Activated CD4-positive, alpha-beta T cell treated with anti-CD3 and anti-CD28 coated beads, Interleukin-2, amount 10 ng/mL, durations not matched to agents 7 days and 5 days (primary cell): ENCODE measurements at regions of chr2 and their contacts with region 1.

Region 1: GRCh38 chr2:201231781-201232466 is 28.4 kb upstream of the CASP8 start:
- DNase-seq: peak; percentile 97
- H3K4me3 Mint-ChIP-seq: peak overlapping the region; percentile 92
- H3K27ac Mint-ChIP-seq: peak overlapping the region; percentile 90
- H3K4me1 Mint-ChIP-seq: peaks cover 55% of the 10 kb centered on the region
- H3K27me3 Mint-ChIP-seq: no peaks in the 10 kb centered on the region

Region 2: DNA sequence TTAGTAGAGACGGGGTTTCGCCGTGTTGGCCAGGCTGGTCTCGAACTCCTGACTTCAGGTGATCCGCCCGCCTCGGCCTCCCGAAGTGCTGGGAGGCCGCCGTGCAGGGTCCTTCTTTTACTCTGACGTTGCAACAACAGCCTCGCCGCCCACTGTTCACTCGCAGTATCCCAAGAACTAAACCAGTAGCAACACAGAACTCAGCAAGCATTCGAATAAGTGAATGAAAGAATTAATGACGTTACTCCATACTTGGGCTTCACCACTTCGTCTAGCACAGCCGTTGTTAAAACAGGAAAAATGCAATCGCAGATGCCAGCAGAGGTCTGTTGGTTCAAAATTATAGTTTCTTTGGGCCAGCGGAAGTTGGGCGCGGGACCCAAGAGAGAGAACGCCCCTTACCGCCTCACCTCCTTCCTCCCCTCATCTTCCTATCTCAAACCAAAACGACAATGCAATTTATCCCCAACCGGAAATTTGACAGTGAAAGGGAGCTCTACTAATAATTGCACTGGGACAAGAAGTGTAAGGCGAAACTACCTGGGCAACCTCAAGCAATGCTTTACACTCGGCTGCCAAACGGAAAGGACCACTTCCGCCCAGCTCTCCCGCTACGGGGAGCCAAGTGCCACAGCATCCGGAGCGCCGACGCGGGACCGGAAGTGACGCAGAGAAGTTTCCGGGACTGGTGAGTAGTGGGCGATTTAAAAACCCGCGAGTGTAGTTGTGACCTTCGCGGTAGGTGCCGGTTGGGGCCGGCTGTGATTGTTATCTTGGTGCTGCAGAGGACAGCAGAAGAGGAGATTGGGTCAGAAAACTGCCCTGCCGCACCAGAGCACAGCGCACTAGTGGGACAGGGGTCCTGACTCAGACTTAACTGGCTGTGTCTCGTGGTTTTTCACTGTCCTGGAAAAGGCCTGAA is 343.0 kb before region 1 on chr2 and contains the starts of genes NIF3L1 and PPIL3:
- CTCF ChIA-PET with region 1: interaction called, 17 read pairs
- POLR2A ChIA-PET with region 1: interaction called, 3 read pairs
- DNase-seq: peak; percentile 98
- H3K4me3 Mint-ChIP-seq: peak within 1 kb of the TSS; percentile 97
- H3K27ac Mint-ChIP-seq: peak within 1 kb of the TSS; percentile 99
- H3K4me1 Mint-ChIP-seq: peaks cover 52% of the 10 kb centered on the region
- H3K27me3 Mint-ChIP-seq: no peaks in the 10 kb centered on the region
- total RNA-seq, gene NIF3L1: 32.5 to 37.1 TPM
- total RNA-seq, gene PPIL3: 42.6 to 47.7 TPM

Region 3: GRCh38 chr2:201182650-201183364 is 49.1 kb before region 1 on chr2 and contains the start of gene CASP10:
- CTCF ChIA-PET with region 1: interaction called, 46 read pairs
- POLR2A ChIA-PET with region 1: interaction called, 12 read pairs
- DNase-seq: peak; percentile 50
- H3K4me3 Mint-ChIP-seq: peak within 1 kb of the TSS; percentile 90
- H3K27ac Mint-ChIP-seq: peak within 1 kb of the TSS; percentile 89
- H3K4me1 Mint-ChIP-seq: peaks cover 40% of the 10 kb centered on the region
- H3K27me3 Mint-ChIP-seq: no peaks in the 10 kb centered on the region
- total RNA-seq, gene CASP10: 45.0 to 49.6 TPM

Region 4: DNA sequence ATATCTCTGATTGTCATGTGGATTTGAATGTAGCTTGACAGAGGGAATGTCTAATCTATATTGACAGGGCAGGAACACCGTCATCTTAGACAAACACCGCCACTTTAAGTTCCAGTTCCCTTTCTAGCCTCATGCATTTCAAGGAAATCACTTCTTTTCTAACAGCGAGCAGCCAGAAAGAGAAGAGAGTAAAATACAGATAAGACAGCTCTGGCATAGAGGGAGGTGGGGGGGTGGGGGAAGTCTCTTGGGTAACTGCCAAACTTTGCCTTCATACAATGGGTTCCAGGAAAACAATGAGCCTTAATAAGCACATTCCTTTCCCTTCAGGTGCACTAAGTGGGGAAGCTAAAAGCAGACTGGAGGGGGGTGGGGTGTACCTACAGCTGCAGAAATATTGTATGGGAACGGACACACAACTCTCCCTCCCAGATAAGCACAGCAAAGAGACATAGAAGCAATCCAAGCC is 11.8 kb before region 1 on chr2:
- CTCF ChIA-PET with region 1: interaction called, 72 read pairs
- POLR2A ChIA-PET with region 1: interaction called, 5 read pairs
- DNase-seq: no peak
- H3K4me3 Mint-ChIP-seq: no peak overlapping the region
- H3K27ac Mint-ChIP-seq: peak overlapping the region; percentile 54
- H3K4me1 Mint-ChIP-seq: peaks cover 54% of the 10 kb centered on the region
- H3K27me3 Mint-ChIP-seq: no peaks in the 10 kb centered on the region

Region 5: GRCh38 chr2:201267278-201268030 is 35.5 kb after region 1 on chr2:
- CTCF ChIA-PET with region 1: interaction called, 39 read pairs
- POLR2A ChIA-PET with region 1: interaction called, 8 read pairs
- DNase-seq: no peak
- H3K4me3 Mint-ChIP-seq: no peak overlapping the region
- H3K27ac Mint-ChIP-seq: peak overlapping the region; percentile 43
- H3K4me1 Mint-ChIP-seq: peaks cover 82% of the 10 kb centered on the region
- H3K27me3 Mint-ChIP-seq: no peaks in the 10 kb centered on the region

Region 6: GRCh38 chr2:201451292-201452057 is 219.6 kb after region 1 on chr2 and contains the starts of genes STRADB and TRAK2:
- CTCF ChIA-PET with region 1: interaction called, 17 read pairs
- POLR2A ChIA-PET with region 1: interaction called, 6 read pairs
- DNase-seq: peak; percentile 97
- H3K4me3 Mint-ChIP-seq: peak within 1 kb of the TSS; percentile 95
- H3K27ac Mint-ChIP-seq: peak within 1 kb of the TSS; percentile 98
- H3K4me1 Mint-ChIP-seq: peaks cover 52% of the 10 kb centered on the region
- H3K27me3 Mint-ChIP-seq: no peaks in the 10 kb centered on the region
- total RNA-seq, gene STRADB: 25.1 to 27.9 TPM
- total RNA-seq, gene TRAK2: 54.9 to 58.3 TPM